ENCODE measurements at regions of chr2 and their contacts with region 1.

Region 1: DNA sequence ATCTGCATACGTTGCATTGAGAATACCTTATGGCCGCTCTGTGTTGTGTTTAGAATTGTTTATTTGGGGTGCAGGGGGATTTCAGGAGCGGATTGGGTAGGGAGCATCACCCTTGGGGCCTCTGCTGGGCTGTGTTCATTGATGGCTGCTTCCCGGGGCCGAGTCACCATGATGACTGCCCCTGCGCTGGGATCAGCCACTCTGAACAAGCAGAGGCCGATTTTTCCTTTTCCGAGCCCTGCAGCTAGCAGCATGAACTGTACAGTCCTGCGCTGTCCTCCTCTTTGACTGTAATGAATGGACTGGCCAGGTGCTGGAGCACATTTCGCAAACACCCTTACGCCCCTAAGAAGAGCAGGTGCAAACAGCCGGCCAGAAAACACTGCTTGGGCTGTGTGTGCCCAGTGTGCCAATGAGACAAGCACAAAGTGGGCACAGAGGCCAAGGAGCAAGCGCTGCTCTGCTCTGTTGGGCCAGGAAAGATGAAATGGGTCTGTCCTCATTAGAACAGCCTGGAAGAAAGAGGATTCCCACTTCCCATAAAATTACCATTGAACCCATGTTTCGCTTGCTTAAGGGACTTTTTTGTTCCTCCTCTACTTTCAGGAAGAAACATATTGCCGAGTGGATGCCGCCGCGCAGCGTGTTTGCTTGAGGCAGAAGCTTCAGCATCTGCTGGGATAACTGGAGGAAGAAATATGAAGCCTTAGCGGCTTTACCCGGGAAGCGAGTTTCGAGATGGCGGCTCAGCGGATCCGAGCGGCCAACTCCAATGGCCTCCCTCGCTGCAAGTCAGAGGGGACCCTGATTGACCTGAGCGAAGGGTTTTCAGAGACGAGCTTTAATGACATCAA is 82.7 kb downstream of the SH3BP4 start:
- DNase-seq: no peak
- ATAC-seq: no peak
- H3K4me3 ChIP-seq: no peak overlapping the region
- H3K27ac ChIP-seq: peak overlapping the region in 1 of 4 donors; percentile 16
- H3K4me1 ChIP-seq: peaks cover 12% of the 10 kb centered on the region
- H3K27me3 ChIP-seq: no peaks in the 10 kb centered on the region
- CTCF ChIP-seq: no peak
- POLR2A ChIP-seq: no peak

Region 2: DNA sequence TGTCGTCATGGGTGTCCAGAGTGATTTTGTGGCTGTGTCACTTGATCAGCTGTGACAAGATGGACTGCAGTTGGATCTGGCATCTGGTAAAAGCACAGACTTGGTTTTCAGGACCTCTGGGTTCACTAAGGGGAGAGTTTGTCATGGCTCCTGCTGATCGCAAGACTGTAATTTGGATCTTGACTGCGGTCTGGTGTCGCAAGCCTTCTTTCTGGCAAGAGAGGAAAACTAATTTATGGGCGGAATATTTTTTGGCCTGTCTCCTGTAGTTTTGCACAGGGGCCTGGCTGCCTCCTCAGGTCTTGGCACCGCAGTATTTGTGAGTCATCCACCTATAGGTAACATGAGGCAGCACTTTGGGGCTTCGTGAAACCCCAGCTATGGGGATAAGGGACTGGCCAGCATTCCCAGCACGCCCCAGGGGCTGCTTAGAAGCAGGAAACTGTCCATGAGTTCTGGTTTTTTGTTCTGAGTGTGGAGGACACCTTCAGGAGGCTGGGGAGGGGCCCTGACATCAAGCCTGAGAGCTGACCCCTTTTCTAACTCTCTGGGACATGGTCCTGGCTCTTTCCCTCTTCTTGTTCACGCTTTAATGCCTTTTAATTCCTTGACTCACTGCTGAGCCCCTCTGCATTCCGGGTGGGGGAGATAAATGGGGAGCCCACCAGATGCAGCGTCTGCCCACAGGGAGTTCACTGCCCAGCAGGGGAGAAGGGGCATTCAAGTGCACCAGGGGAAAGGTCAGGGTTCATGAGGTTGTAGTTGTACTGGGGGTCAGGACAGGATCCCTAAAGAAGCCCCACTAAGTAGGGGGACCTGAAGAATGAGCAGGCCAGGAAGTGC is 70.5 kb before region 1 on chr2:
- intact Hi-C with region 1: loop called (anchors 10 kb)
- DNase-seq: peak; percentile 44 to 79 (median 60)
- ATAC-seq: peak; percentile 73
- H3K4me3 ChIP-seq: no peak overlapping the region
- H3K27ac ChIP-seq: peak overlapping the region; percentile 45 to 61 (median 52)
- H3K4me1 ChIP-seq: peaks cover 77% of the 10 kb centered on the region
- H3K27me3 ChIP-seq: no peaks in the 10 kb centered on the region
- CTCF ChIP-seq: no peak
- POLR2A ChIP-seq: no peak

Measured in body of pancreas (tissue), 4 donors.